Spleen (tissue), 13 donors: ENCODE measurements at regions of chr15 and their contacts with region 1.

Region 1: GRCh38 chr15:29913528-29914135 is 91.4 kb upstream of the TJP1 start:
- DNase-seq: no peak
- H3K4me3 ChIP-seq: no peak overlapping the region
- H3K27ac ChIP-seq: no peak overlapping the region
- H3K4me1 ChIP-seq: no peaks in the 10 kb centered on the region
- H3K27me3 ChIP-seq: no peaks in the 10 kb centered on the region
- CTCF ChIP-seq: no peak
- POLR2A ChIP-seq: no peak

Region 2: GRCh38 chr15:29835301-29835700 is 78.3 kb before region 1 on chr15:
- intact Hi-C with region 1: loop called (anchors 10 kb)
- DNase-seq: no peak
- H3K4me3 ChIP-seq: no peak overlapping the region
- H3K27ac ChIP-seq: peak overlapping the region in 3 of 8 donors; percentile 0 to 37 (median 19)
- H3K4me1 ChIP-seq: peaks cover 0 to 16% (median 0%) of the 10 kb centered on the region in 6 donors
- H3K27me3 ChIP-seq: peaks cover 0 to 71% (median 0%) of the 10 kb centered on the region in 7 donors
- CTCF ChIP-seq: no peak
- POLR2A ChIP-seq: no peak